ENCODE measurements at regions of chrX and their contacts with region 1.

Region 1: DNA sequence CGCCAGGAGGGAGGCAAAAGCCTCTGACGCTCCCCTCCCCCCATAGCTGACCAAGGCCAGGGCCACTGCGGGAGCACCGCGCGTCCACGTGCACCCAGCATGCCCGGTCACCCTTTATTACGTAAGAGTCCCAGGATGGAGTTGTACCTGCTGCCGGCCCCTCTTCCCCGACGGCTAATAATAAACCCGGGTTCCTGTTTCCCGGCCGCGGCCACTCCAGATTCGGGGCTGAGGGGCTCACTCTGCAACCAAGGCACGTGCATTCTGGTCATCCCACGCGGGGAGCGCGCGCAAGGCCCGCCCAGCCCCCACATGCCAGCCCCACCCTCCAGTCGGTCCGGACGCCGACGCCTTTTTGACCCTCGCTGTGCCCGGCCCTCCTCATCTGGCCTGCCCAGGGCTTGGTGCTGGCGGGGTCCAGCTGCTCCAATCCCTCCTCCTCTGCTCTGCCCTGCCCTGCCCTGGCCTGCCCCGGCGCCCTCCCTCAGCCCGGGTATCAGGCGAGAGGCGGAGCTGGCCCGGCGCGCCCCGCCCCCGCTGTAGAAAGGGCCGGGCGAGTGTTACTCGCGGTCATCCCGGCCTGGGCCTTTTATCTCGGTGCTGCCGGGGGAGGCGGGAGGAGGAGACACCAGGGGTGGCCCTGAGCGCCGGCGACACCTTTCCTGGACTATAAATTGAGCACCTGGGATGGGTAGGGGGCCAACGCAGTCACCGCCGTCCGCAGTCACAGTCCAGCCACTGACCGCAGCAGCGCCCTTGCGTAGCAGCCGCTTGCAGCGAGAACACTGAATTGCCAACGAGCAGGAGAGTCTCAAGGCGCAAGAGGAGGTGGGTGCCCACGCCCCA is 2.5 kb downstream of the MID1IP1 start:
- DNase-seq: peak; percentile 79
- H3K4me3 Mint-ChIP-seq: peak overlapping the region; percentile 87
- H3K27ac Mint-ChIP-seq: peak overlapping the region; percentile 97
- H3K4me1 Mint-ChIP-seq: peaks cover 17% of the 10 kb centered on the region
- H3K27me3 Mint-ChIP-seq: no peaks in the 10 kb centered on the region

Region 2: GRCh38 chrX:38859602-38860001 is 55.8 kb after region 1 on chrX:
- CTCF ChIA-PET with region 1: no interaction called
- intact Hi-C with region 1: loop called (anchors 2 kb)
- DNase-seq: no peak
- H3K4me3 Mint-ChIP-seq: no peak overlapping the region
- H3K27ac Mint-ChIP-seq: no peak overlapping the region
- H3K4me1 Mint-ChIP-seq: no peaks in the 10 kb centered on the region
- H3K27me3 Mint-ChIP-seq: no peaks in the 10 kb centered on the region

Region 3: GRCh38 chrX:38985375-38985774 is 181.6 kb after region 1 on chrX:
- CTCF ChIA-PET with region 1: interaction called, 3 read pairs
- intact Hi-C with region 1: loop called (anchors 1 kb)
- DNase-seq: peak; percentile 7
- H3K4me3 Mint-ChIP-seq: no peak overlapping the region
- H3K27ac Mint-ChIP-seq: no peak overlapping the region
- H3K4me1 Mint-ChIP-seq: peaks cover 2% of the 10 kb centered on the region
- H3K27me3 Mint-ChIP-seq: no peaks in the 10 kb centered on the region

Region 4: GRCh38 chrX:39613482-39613921 is 809.7 kb after region 1 on chrX:
- CTCF ChIA-PET with region 1: no interaction called
- intact Hi-C with region 1: loop called (anchors 1 kb)
- DNase-seq: peak; percentile 29
- H3K4me3 Mint-ChIP-seq: peak overlapping the region; percentile 70
- H3K27ac Mint-ChIP-seq: peak overlapping the region; percentile 87
- H3K4me1 Mint-ChIP-seq: peaks cover 22% of the 10 kb centered on the region
- H3K27me3 Mint-ChIP-seq: no peaks in the 10 kb centered on the region

Region 5: GRCh38 chrX:39996536-39996935 is 1192.7 kb after region 1 on chrX:
- CTCF ChIA-PET with region 1: no interaction called
- intact Hi-C with region 1: no loop called
- DNase-seq: no peak
- H3K4me3 Mint-ChIP-seq: no peak overlapping the region
- H3K27ac Mint-ChIP-seq: no peak overlapping the region
- H3K4me1 Mint-ChIP-seq: no peaks in the 10 kb centered on the region
- H3K27me3 Mint-ChIP-seq: no peaks in the 10 kb centered on the region

Measured in activated naive CD4-positive, alpha-beta T cell treated with anti-CD3 and anti-CD28 coated beads for 36 hours (primary cell).